ENCODE measurements at regions of chr4 and their contacts with region 1.

Region 1: GRCh38 chr4:108683479-108683878 is 33.1 kb downstream of the OSTC start:
- ATAC-seq: peak in 4 of 8 experiments; percentile 52 to 70 (median 66)
- H3K4me3 ChIP-seq: no peak overlapping the region
- H3K27ac ChIP-seq: no peak overlapping the region
- H3K4me1 ChIP-seq: no peaks in the 10 kb centered on the region

Region 2: GRCh38 chr4:108166441-108167315 is 516.8 kb before region 1 on chr4:
- in situ Hi-C with region 1: no loop called
- ATAC-seq: peak in 7 of 8 experiments; percentile 7 to 67 (median 54)
- H3K4me3 ChIP-seq: peak overlapping the region; percentile 31 to 51 (median 47)
- H3K27ac ChIP-seq: no peak overlapping the region
- H3K4me1 ChIP-seq: peaks cover 0 to 12% of the 10 kb centered on the region in 2 donors

Region 3: DNA sequence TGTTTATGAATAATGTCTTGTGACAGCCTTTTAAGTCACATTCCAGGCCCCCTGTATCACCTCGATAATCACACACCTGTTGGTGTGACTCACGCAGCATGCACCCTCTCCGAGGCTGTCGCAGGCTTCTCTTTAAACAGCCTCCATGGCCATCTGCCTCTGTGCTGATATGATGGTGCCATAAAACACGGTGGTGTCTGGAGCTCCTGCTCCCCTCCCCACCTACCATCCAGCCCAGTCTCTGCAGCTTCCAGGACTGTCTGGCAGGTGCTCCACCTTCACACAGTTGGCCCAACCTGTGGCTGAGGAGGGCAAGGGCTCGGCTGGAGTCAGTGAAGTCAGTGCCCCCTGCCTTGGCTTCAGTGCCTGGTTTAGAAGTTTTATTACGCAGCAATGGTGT is 236.9 kb before region 1 on chr4:
- in situ Hi-C with region 1: no loop called
- ATAC-seq: no peak
- H3K4me3 ChIP-seq: no peak overlapping the region
- H3K27ac ChIP-seq: no peak overlapping the region
- H3K4me1 ChIP-seq: no peaks in the 10 kb centered on the region

Region 4: DNA sequence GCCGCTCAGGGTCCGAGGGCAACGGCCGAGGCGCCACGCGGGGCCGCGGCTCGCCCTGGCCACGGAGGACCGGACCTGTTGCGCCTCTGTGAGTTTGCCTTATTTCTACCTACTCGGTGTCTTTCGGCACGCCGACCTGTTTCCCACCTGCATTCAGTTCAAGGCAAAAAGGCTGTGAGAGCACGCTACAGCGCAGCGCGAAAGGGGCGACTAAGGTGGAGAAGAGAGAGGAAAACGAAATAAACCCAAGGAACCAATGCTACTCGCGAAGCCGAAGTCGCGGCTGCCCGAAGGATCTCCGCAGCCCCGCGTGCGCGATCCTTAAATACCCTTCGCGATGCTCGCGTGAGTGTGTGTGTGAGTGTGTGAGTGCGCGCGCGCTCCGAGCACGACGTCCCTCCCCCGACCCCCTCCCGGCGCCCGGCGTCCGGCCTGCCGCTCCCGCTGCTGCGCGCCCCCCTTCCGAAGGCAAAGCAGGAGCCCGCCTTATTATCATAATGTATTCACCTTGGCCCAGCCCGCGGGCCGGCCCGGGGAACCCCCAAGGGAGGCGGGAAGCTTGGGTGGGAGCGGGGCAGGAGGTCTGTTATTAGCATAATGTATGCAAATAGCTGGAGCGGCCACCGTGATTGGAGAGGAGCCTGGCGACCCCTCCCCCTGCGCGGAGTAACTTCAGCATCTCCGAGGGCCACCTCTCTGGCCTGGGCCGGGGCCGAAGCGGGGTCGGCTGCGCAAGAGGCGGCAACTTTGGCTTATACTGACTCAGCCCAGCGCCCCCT is 619.1 kb after region 1 on chr4 and contains the start of gene COL25A1:
- in situ Hi-C with region 1: loop called in 1 of 9 experiments (anchors 25 kb)
- ATAC-seq: peak; percentile 88 to 97 (median 94)
- H3K4me3 ChIP-seq: peak within 1 kb of the TSS; percentile 39 to 52 (median 43)
- H3K27ac ChIP-seq: no peak within 1 kb of the TSS
- H3K4me1 ChIP-seq: peaks cover 3 to 5% of the 10 kb centered on the region in 2 donors
- total RNA-seq, gene COL25A1: 1.3 to 15.1 (median 2.7) TPM

Region 5: DNA sequence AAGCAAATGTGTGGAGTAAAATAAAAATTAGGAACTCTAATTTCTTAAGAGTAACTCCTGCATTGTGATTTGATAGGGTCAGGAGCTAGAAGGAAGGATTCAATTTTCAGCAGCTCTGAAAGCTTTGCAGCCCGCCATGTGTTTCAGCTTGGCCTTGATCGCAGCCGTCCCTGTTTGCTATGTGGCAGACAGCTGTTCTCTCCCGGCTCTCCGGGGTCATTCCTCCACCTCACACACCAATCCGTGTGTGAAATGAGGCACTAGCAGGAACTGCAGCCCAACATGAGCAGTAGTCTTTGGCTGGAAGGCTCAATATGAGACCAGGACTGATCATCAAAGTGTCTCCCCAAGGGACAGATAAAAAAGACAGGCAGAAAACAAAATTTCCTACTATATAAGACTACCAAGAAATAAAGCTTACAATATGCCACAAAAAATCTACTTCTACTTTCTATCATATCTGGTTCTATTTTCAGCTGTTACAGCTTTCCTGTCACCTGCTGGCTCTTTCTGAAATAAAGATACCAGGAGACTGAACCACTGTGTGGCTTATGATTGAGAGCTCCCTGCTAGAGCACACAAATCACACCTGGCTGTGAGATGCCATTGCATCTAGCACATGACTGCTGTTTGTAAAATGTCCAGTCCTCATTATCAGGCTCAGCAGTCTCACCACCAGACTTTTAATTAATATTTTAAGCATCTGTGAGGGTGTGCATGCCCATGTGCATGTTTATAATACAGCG is 706.1 kb after region 1 on chr4:
- in situ Hi-C with region 1: loop called in 1 of 9 experiments (anchors 25 kb)
- ATAC-seq: peak in 7 of 8 experiments; percentile 36 to 80 (median 63)
- H3K4me3 ChIP-seq: no peak overlapping the region
- H3K27ac ChIP-seq: no peak overlapping the region
- H3K4me1 ChIP-seq: peaks cover 0 to 17% of the 10 kb centered on the region in 2 donors

Measured in motor neuron (in vitro differentiated cells).